ENCODE measurements at regions of chr14 and their contacts with region 1.

Region 1: DNA sequence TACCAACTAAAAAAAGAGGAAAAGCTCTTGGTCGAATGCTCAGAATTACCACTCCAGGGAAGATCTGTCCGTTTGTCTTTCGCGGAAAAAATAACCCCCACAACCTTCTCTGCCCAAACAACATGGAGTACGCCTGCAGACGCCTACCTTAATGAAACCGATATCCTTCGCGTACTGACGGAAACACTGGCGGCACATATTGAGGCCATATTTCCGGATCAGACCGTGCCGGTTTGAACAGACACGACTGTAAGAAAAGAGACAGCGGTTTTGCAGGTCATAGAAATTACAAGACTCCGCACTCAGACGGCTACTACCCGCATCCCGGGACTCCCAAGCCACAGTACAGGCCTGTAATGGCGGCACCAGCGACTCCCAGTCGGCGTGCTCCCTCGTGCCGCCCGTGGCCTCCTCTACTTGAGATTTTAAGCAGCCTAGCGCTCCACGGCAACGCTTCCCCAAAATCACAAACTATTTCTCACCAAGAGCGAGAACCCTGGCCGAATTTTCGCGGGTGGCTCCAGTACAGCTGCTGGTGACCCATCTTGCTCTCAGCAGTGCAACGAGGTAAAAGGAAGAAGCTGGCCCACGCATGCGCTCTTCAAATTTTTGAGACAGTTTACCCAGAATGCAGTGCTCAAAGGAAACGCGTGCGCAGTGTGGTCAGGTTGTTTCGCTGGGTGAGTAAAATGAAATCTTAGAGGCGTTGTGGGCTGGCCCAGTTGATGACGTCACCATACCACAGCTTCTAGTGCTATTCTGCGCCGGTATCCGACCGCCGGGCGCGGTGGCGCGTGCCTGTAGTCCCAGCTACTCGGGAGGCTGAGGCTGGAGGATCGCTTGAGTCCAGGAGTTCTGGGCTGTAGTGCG is at the start of gene RPS29:
- DNase-seq: peak; percentile 98 to 100
- H3K4me3 ChIP-seq: peak within 1 kb of the TSS; percentile 98 to 100 (median 98)
- H3K27ac ChIP-seq: peak within 1 kb of the TSS; percentile 96
- H3K4me1 ChIP-seq: peaks cover 0 to 9% (median 5%) of the 10 kb centered on the region in 4 experiments; a peak in 6 of 7 replicates
- H3K27me3 ChIP-seq: no peaks in the 10 kb centered on the region
- CTCF ChIP-seq: no peak
- EP300 ChIP-seq: no peak
- POLR2A ChIP-seq: peak; percentile 93 to 97
- RAD21 ChIP-seq: no peak
- total RNA-seq, gene RPS29: 2,193 and 2,231 TPM in 2 replicates

Region 2: GRCh38 chr14:49497725-49498348 is 88.2 kb before region 1 on chr14:
- CTCF ChIA-PET with region 1: no interaction called
- POLR2A ChIA-PET with region 1: interaction called, 12 read pairs
- DNase-seq: no peak
- H3K4me3 ChIP-seq: no peak overlapping the region
- H3K27ac ChIP-seq: no peak overlapping the region
- H3K4me1 ChIP-seq: peaks cover 0 to 4% (median 1%) of the 10 kb centered on the region in 4 experiments; a peak in 2 of 7 replicates
- H3K27me3 ChIP-seq: no peaks in the 10 kb centered on the region
- CTCF ChIP-seq: peak in 2 of 3 experiments; percentile 61 to 79; a peak in 2 of 4 replicates
- EP300 ChIP-seq: no peak
- POLR2A ChIP-seq: no peak
- RAD21 ChIP-seq: peak; percentile 94

Region 3: GRCh38 chr14:49550286-49551184 is 35.5 kb before region 1 on chr14:
- CTCF ChIA-PET with region 1: interaction called, 4 read pairs
- POLR2A ChIA-PET with region 1: interaction called, 10 read pairs
- DNase-seq: no peak
- H3K4me3 ChIP-seq: peak overlapping the region in 1 of 4 experiments; percentile 37; a peak in 1 of 8 replicates
- H3K27ac ChIP-seq: no peak overlapping the region
- H3K4me1 ChIP-seq: peaks cover 0 to 9% (median 6%) of the 10 kb centered on the region in 4 experiments; a peak in 3 of 7 replicates
- H3K27me3 ChIP-seq: no peaks in the 10 kb centered on the region
- CTCF ChIP-seq: peak in 2 of 3 experiments; percentile 23 to 55; a peak in 2 of 4 replicates
- EP300 ChIP-seq: no peak
- POLR2A ChIP-seq: no peak
- RAD21 ChIP-seq: peak; percentile 75

Region 4: DNA sequence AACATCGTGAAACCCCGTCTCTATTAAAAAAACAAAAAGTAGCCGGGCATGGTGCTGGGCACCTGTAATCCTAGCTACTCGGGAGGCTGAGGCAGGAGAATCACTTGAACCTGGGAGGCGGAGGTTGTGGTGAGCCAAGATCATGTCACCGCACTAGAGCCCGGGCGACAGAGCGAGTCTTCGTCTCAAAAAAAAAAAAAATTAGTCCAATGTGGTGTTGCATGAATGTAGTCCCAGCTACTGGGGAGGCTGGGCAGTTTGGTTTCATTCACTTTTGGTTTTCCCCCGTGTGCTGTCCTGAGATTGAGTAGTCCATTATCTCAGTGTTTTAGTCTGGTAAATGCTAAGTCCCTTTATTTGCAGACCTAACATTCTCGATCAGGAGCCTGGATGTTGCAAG is 19.3 kb before region 1 on chr14:
- CTCF ChIA-PET with region 1: interaction called, 5 read pairs
- POLR2A ChIA-PET with region 1: interaction called, 52 read pairs
- DNase-seq: no peak
- H3K4me3 ChIP-seq: no peak overlapping the region
- H3K27ac ChIP-seq: no peak overlapping the region
- H3K4me1 ChIP-seq: no peaks in the 10 kb centered on the region
- H3K27me3 ChIP-seq: no peaks in the 10 kb centered on the region
- CTCF ChIP-seq: no peak
- EP300 ChIP-seq: no peak
- POLR2A ChIP-seq: no peak
- RAD21 ChIP-seq: no peak

Region 5: DNA sequence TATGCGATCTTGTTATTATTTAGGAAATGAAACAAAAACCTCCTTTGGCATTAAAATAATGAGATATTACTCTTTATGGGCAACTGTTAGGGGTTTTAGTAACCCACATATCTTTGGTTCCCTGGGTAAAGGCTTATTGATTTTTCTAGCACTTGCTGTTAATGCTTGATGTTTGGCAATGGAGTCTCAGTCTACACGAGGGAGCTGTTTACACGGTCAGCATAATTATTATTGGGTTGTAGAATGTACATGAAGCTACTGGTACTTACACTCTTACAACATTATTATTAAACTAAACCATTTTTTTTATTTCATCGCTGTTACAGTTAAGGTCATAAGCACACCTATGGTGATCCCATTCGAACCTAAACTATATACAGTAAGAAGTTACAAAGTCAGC is 12.0 kb before region 1 on chr14:
- CTCF ChIA-PET with region 1: interaction called, 5 read pairs
- POLR2A ChIA-PET with region 1: interaction called, 52 read pairs
- DNase-seq: no peak
- H3K4me3 ChIP-seq: no peak overlapping the region
- H3K27ac ChIP-seq: no peak overlapping the region
- H3K4me1 ChIP-seq: no peaks in the 10 kb centered on the region
- H3K27me3 ChIP-seq: no peaks in the 10 kb centered on the region
- CTCF ChIP-seq: no peak
- EP300 ChIP-seq: no peak
- POLR2A ChIP-seq: no peak
- RAD21 ChIP-seq: no peak

Region 6: GRCh38 chr14:49598485-49599300 is 12.7 kb after region 1 on chr14 and contains the start of gene LRR1:
- CTCF ChIA-PET with region 1: interaction called, 18 read pairs
- POLR2A ChIA-PET with region 1: interaction called, 169 read pairs
- DNase-seq: peak in 1 of 2 experiments; percentile 96
- H3K4me3 ChIP-seq: peak within 1 kb of the TSS; percentile 61 to 98 (median 92)
- H3K27ac ChIP-seq: peak within 1 kb of the TSS; percentile 95
- H3K4me1 ChIP-seq: 0 out of 7 replicates have a peak, but pooled peaks cover 0 to 2% (median 0%) of the 10 kb centered on the region in 4 experiments
- H3K27me3 ChIP-seq: no peaks in the 10 kb centered on the region
- CTCF ChIP-seq: no peak
- EP300 ChIP-seq: no peak
- POLR2A ChIP-seq: peak; percentile 45 to 96
- RAD21 ChIP-seq: no peak
- total RNA-seq, gene LRR1: 37.5 and 37.7 TPM in 2 replicates

Region 7: DNA sequence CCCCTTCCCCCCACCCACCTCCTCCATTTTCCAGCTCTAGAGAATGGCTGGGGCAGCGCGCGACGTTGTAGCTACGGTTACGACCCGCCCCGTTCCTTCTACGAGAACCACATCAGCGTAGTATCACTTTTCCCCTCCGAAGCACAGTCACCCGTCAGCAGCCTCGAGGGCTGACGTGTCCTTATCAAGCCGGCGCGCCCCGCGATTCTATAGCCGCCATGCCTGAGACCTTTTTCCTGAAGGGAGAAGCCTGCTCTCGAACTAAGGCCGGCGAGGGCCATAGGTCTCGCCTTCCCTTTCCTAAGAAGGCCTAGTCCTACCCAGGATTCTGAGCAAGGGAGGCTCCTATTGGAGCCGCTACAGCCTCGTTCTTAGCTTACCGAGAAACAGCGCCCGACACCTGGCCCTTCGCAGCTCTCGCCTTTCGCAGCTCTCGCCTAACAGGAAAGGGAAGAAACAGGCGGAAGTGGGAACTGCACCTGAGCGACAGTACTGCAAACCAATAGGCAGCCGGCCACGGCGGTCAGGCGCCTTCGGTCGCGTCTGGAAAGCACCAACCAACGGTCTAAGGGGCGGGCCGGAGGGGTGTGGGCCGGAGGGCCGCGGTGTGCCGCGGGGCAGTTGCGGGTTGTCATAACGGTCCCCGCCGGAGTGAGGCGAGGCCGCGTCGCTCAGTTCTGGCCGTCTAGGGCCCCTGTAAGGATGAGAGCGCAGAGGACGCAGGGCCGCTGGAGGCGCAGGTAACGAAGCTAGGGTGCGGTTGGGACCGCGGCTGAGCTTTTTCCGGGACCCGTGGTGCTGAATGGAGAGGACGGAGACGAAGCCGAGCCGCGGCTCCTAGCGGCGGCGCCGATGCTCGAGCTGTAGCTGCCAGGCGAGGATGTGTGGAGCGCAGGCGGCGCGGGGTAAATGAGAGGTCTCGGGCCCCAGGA is 34.4 kb after region 1 on chr14 and contains the starts of genes MGAT2 and RPL36AL:
- CTCF ChIA-PET with region 1: interaction called, 3 read pairs
- POLR2A ChIA-PET with region 1: interaction called, 53 read pairs
- DNase-seq: peak; percentile 92 to 97
- H3K4me3 ChIP-seq: peak within 1 kb of the TSS; percentile 80 to 99 (median 94)
- H3K27ac ChIP-seq: peak within 1 kb of the TSS; percentile 95
- H3K4me1 ChIP-seq: peaks cover 1 to 9% (median 3%) of the 10 kb centered on the region in 4 experiments; a peak in 3 of 7 replicates
- H3K27me3 ChIP-seq: no peaks in the 10 kb centered on the region
- CTCF ChIP-seq: peak in 1 of 3 experiments; percentile 7; a peak in 1 of 4 replicates
- EP300 ChIP-seq: no peak
- POLR2A ChIP-seq: peak; percentile 87 to 91
- RAD21 ChIP-seq: 0 out of 4 replicates have a peak, but pooled peaks of 1 of the 2 experiments have one; percentile 1
- total RNA-seq, gene MGAT2: 23.7 and 24.5 TPM in 2 replicates
- total RNA-seq, gene RPL36AL: 230 and 233 TPM in 2 replicates

Region 8: DNA sequence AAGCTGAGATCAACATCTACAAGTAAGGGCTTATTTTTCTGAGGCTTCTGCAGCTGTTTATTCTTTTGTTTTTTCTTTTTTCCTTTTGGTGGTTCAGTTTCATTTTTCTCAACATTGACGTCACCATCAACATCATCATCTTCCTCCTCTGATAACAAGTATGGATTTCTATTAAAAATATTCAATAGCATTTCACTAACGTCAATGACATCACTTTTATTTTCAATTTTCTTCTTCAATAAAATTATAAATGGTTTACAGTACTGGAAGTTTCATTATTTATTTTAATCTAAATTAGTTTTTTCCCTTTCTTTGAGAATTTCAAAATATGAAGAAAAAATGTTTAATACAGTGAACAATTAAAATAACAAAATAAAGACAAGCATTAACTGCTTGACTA is 242.6 kb after region 1 on chr14:
- CTCF ChIA-PET with region 1: no interaction called
- POLR2A ChIA-PET with region 1: no interaction called
- DNase-seq: no peak
- H3K4me3 ChIP-seq: no peak overlapping the region
- H3K27ac ChIP-seq: no peak overlapping the region
- H3K4me1 ChIP-seq: no peaks in the 10 kb centered on the region
- H3K27me3 ChIP-seq: no peaks in the 10 kb centered on the region
- CTCF ChIP-seq: no peak
- EP300 ChIP-seq: no peak
- POLR2A ChIP-seq: no peak
- RAD21 ChIP-seq: no peak

Region 9: DNA sequence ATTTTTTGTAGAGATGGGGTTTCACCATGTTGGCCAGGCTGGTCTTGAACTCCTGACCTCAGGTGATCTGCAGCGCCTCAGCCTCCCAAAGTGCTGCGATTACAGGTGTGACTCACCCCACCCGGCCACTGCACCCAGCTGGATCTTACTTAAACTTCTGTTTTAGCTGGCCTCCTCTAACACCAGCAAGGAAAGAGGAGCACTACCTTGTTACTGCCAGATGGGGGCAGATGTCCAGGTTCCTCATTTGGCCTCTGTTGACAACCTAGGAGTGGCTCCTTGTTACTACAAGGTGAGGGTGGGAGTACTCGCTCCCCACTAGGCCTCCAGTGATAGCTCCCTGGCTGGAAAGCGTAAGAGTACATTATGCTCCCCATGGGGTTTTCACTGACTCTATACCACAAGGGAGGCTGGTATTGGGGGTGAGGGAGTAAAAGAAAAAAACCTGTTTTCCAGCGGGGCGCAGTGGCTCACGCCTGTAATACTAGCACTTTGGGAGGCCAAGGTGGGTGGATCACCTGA is 293.7 kb after region 1 on chr14:
- CTCF ChIA-PET with region 1: no interaction called
- POLR2A ChIA-PET with region 1: no interaction called
- DNase-seq: peak; percentile 61 to 67
- H3K4me3 ChIP-seq: no peak overlapping the region
- H3K27ac ChIP-seq: no peak overlapping the region
- H3K4me1 ChIP-seq: peaks cover 2 to 8% (median 7%) of the 10 kb centered on the region in 4 experiments; a peak in 5 of 7 replicates
- H3K27me3 ChIP-seq: no peaks in the 10 kb centered on the region
- CTCF ChIP-seq: peak; percentile 63 to 93 (median 86)
- EP300 ChIP-seq: no peak
- POLR2A ChIP-seq: no peak
- RAD21 ChIP-seq: peak; percentile 63 to 80